ENCODE measurements at regions of chr3 and their contacts with region 1.

Region 1: DNA sequence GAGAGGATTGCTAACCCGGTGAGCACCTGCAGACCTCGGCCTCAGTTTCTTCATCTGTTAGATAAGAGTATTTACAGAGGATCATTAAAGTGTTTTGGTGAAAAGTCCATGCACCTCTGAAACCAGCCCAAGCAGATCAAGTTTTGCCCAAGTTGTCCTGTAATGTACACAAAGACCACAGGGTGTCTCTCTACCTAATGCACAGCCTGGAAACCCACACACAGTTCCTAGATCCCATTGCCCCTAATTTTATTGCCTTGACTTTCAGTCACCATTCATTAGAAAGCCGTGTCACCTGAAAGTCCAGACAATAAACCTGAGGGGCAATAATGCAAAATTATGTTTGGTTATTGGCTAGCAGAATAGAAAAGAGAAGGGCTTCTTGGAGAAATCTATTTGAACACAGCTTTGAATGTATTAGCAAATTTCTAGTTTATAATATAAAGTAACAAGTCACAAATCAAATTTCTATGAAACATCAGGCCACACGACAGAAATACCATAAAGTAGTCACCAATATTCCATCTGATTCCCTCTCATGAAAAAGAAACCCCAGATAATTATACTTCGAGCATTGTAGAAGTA is 161.3 kb upstream of the SLC2A2 start:
- DNase-seq: no peak
- ATAC-seq: peak; percentile 83

Region 2: DNA sequence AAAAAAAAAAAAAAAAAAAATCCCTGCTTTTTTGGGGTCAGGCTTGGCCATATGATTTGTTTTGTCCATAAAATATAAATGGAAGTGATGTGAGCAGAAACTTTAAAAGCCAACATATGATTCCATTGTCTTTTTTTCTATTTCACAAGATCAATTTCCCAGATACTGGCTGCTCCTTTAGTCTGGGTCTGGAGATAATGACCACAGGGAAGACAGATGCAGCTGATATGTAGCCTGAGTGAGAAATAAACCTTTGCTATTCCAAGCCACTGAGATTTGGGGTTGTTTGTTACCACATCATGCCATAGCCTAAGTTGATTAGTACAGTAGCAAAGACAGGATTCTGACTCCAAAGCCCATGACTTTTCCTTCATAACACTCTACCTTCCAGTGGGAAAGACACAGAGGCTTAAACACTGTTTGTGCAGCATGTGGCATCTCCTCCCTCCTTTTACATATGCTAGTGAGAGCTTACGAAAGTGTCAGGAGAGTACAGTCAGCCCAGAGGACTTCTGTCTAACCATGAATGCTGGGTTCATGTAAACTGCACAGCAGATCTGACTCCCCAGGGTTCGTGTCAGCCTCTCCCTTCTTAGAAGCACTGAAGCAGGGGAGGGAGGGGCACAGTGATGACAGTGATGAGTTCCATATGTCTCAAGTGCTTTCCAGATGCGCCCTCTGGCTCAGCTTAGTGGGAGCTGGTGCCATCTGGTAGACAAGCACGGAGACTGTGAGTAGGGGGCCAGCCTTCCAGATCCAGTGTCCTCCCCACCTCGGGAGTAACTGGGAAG is 565.2 kb before region 1 on chr3:
- intact Hi-C with region 1: no loop called
- DNase-seq: peak in 1 of 2 donors; percentile 5
- ATAC-seq: no peak

Region 3: GRCh38 chr3:170869645-170870593 is 317.9 kb before region 1 on chr3 and contains the start of gene RPL22L1:
- intact Hi-C with region 1: no loop called
- DNase-seq: peak; percentile 96 to 97
- ATAC-seq: peak; percentile 97
- total RNA-seq, gene RPL22L1: 27.0 to 29.3 TPM

Region 4: GRCh38 chr3:171328419-171329082 is 140.8 kb after region 1 on chr3:
- intact Hi-C with region 1: no loop called
- DNase-seq: peak; percentile 56 to 69
- ATAC-seq: peak; percentile 98

Region 5: DNA sequence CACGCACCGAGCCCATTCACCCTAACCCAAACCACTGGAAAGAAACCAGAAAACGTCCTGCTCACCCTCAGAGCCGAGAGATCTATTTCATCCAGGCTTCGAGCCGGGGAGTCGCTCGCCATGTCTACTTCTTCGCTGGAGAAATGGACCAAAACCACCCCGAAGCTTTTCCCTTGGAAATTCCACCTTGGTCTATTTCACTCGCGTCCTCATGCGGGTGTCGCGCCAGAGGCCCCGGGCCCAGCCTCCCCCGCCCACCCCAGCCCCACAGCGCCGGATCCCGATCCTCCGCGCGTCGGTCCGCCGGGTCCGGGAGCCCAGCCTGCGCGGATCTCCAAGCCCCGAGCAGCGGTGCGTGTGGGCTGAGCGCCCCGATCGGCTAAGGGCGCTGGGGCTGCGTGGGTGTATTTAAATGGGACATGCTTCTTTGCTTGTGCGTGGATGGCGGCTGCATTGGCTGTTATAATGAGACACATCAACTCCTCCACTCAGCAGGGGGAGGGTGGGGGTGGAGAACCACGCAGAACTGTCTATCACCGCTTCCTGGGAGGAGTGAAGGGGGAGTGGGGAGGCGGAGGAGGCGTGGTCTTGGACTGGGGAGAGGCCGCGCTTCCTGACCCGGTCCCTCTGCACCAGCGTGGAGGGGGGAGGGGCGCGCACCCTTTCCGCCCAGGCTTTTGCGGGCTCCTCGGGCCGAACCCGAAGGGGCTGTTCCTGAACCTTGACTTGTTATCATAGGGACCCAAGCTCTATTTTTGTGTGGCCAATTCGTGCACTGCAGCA is 272.3 kb after region 1 on chr3 and contains the start of gene TNIK:
- intact Hi-C with region 1: loop called in 1 of 2 experiments (anchors 5 kb)
- DNase-seq: peak; percentile 97 to 98
- ATAC-seq: peak; percentile 85
- total RNA-seq, gene TNIK: 30.5 to 32.1 TPM